CD8-positive, alpha-beta memory T cell (primary cell): ENCODE measurements at regions of chr17 and their contacts with region 1.

Region 1: DNA sequence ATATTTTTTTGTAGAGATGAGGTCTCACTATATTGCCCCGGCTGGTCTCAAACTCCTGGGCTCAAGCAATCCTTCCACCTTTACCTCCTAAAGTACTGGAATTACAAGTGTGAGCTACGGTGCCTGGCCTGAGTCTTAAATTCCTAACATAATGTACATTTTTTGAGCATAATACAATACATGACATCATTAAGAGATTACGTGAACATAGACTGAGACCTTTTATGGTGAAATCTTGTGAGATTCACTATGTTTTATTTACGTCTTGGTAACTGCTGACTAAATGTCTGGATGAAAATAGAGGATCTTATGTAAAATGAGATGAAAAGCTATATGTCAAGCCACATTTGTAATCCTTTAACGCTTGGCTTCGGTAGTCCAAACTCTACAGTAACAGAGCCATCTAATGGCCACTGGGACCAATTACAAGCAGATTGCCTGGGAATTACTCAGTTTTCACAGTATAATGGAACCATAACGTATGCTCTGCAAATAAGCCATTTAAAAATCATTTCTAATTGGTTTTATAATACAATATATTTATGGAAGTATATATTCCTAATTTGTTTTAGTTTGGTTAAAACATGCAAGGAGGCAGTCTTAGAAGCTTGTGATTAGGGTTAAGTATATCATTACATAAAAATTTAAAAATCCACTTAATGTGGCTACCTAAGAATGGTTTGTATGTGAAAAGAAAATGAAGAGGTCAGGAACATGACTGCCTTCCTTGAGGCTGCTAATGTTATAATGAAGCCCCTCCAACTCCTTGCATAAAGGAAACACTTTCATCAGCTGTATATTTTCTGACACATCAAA is 8.1 kb upstream of the EFCAB13 start:
- DNase-seq: peak in 3 of 5 donors; percentile 37 to 52 (median 49)
- H3K4me3 ChIP-seq: no peak overlapping the region
- H3K4me3 Mint-ChIP-seq: no peak overlapping the region
- H3K27ac ChIP-seq: no peak overlapping the region
- H3K27ac Mint-ChIP-seq: no peak overlapping the region
- H3K4me1 ChIP-seq: no peaks in the 10 kb centered on the region
- H3K4me1 Mint-ChIP-seq: no peaks in the 10 kb centered on the region
- H3K27me3 ChIP-seq: no peaks in the 10 kb centered on the region
- H3K27me3 Mint-ChIP-seq: peaks cover 5 to 6% of the 10 kb centered on the region in 2 donors

Region 2: DNA sequence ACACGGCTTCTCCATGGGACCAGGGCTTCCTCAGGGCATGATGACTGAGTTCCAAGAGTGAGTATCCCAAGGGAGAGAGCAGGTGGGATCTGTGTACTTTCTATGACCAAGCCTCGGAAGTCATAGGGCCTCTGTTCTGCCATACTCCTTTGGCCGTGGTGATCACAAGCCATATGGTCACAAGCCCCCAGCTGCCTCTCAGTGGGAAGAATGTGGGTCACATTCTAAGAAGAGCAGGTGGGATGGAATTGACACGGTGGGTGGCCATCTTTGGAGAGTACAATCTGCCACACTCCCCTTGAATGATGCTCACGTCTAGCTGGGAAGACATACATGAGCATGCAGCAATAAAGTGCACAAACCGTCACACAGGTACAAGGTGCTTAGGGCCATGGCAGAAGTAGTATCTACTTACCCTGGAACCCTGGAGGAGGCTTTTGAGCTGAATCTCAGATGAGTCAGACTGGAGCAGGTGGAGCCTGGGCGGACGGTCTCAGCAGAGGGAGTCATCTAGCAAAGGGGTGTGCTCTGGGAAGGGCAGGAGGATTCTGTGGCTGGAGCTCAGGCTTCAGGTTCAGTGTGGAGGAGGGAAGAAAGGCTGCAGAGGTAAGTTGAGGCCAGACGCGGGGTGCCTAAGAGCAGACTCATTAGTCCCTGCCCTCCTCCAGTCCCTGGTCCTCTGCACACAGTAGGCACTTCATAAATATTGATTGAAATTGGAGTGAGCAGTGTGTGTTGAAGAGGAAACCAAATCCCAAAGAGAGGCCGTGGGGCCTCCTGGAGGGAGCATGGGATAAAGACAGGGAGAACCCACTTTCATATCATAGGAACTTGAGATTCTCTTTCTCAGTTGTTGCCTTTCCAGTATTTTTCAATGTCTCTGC is 366.1 kb before region 1 on chr17:
- CTCF ChIA-PET with region 1: no interaction called
- POLR2A ChIA-PET with region 1: no interaction called
- DNase-seq: no peak
- H3K4me3 ChIP-seq: no peak overlapping the region
- H3K4me3 Mint-ChIP-seq: no peak overlapping the region
- H3K27ac ChIP-seq: no peak overlapping the region
- H3K27ac Mint-ChIP-seq: no peak overlapping the region
- H3K4me1 ChIP-seq: no peaks in the 10 kb centered on the region
- H3K4me1 Mint-ChIP-seq: peaks cover 4 to 8% (median 7%) of the 10 kb centered on the region in 3 donors
- H3K27me3 ChIP-seq: no peaks in the 10 kb centered on the region
- H3K27me3 Mint-ChIP-seq: peaks cover 0 to 1% of the 10 kb centered on the region in 2 donors

Region 3: DNA sequence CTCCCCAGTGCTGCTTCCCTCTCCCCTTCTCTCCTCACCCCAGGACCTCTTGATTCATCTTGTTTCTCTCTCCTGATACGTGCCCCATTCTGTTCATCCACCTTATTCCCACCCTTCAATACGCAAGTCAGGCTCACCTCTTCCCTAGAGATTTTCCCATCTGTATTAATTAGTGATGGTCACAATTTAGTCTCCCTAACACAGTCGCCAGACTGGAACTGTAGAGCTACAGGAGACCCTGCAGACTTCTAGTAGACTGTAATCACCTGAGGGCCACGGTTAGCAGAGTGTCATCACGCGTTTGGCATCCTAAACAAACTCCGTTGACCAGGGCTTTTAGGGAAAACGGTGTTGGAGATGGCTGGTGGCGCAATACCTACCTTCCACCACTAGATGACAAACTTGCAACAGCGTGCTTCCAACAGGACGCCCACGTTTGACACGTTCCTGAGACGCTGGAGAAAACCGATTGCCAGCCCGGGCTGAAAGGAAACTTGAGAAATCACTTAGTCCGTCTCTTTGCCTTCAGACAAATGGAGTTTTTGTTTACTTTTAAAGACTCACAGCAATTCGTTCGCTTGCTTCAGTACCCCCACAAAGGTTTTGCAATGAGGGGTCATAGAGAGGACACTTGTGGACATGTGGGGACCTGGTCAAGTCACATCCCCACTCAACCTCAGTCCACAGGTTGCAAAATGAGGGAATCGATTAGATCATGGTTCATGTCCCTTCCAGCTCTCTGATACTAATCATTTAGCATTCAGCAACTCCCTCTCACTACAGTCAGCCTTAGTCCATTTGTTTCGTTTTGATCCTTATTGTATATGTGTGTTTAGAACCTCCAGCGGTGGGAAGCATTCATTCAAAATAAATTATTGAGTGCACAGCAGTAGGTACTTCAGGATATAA is 85.9 kb before region 1 on chr17:
- CTCF ChIA-PET with region 1: interaction called, 16 read pairs
- POLR2A ChIA-PET with region 1: no interaction called
- DNase-seq: peak; percentile 36 to 73 (median 54)
- H3K4me3 ChIP-seq: peak overlapping the region; percentile 25
- H3K4me3 Mint-ChIP-seq: peak overlapping the region in 6 of 7 donors; percentile 4 to 79 (median 59)
- H3K27ac ChIP-seq: peak overlapping the region; percentile 19
- H3K27ac Mint-ChIP-seq: peak overlapping the region in 1 of 8 donors; percentile 45
- H3K4me1 ChIP-seq: peaks cover 8% of the 10 kb centered on the region
- H3K4me1 Mint-ChIP-seq: peaks cover 10 to 15% (median 13%) of the 10 kb centered on the region in 3 donors
- H3K27me3 ChIP-seq: no peaks in the 10 kb centered on the region
- H3K27me3 Mint-ChIP-seq: peaks cover 3 to 6% of the 10 kb centered on the region in 2 donors

Region 4: DNA sequence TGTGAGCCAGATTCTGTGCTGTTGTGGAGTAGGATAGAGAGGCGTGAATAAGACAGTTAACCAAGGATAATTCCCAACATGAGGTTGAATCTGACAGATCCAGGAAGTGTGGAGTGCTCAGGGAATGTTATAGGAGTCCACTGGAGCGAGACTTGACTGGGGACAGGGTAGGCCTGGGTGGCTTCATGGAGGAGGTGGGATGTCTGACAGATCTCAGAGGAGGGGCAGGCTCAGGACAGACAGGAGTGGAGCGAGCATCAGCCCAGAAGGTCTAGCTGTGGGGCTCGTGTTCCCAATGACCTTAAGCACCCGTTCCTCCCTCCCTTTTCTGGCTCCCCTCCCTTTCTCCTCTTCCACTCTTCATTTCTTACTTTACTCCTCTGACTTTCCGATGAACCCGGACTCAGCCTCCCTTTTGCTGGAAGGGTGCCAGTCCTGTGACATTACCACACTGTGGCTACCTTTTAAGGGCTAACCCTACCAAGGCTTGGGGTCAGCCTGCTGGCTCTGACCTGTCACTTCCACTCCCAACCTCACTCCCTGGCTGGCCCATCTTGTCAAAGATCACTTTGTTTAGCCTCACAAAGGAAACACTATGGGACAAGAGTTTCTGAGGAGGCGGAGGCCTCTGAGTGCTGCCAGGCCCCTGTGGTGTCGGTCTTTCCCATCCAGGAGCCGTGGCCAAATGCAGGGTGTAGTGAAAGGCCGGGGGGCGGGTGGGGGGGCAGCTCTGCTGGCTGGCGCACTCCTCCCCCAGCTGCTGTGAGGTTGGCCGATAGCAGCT is 20.4 kb before region 1 on chr17:
- CTCF ChIA-PET with region 1: no interaction called
- POLR2A ChIA-PET with region 1: no interaction called
- DNase-seq: no peak
- H3K4me3 ChIP-seq: no peak overlapping the region
- H3K4me3 Mint-ChIP-seq: no peak overlapping the region
- H3K27ac ChIP-seq: no peak overlapping the region
- H3K27ac Mint-ChIP-seq: peak overlapping the region in 1 of 8 donors; percentile 11
- H3K4me1 ChIP-seq: no peaks in the 10 kb centered on the region
- H3K4me1 Mint-ChIP-seq: no peaks in the 10 kb centered on the region
- H3K27me3 ChIP-seq: no peaks in the 10 kb centered on the region
- H3K27me3 Mint-ChIP-seq: peaks cover 6 to 10% of the 10 kb centered on the region in 2 donors